ENCODE measurements at regions of chr12 and their contacts with region 1.

Region 1: GRCh38 chr12:4307593-4308333 is 13.2 kb upstream of the TIGAR start:
- DNase-seq: peak; percentile 83
- ATAC-seq: peak; percentile 94
- H3K4me3 ChIP-seq: peak overlapping the region; percentile 50
- H3K27ac ChIP-seq: no peak overlapping the region
- H3K4me1 ChIP-seq: peaks cover 7% of the 10 kb centered on the region
- H3K27me3 ChIP-seq: peaks cover 31% of the 10 kb centered on the region
- CTCF ChIP-seq: peak; percentile 76

Region 2: DNA sequence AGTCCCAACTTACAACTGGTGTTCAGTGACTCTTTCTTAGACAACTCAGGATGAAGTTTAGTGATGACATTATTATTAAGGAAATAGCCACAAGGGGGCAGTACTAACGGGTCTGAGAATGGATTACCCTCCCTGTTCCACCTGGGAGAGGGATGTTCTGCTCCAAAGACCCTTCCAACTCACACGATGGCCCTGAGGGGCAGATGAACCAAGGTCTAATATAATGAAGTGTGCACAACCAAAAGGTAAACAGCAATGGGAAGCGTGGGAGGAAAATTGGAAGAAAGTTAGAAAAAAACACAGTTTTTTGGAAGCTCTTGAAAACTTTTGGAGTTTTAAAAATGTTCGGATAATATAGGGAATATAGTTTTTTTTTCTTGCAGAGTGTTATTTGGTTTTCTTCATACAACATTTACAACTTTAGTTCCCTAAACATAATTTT is 113.8 kb after region 1 on chr12:
- CTCF ChIA-PET with region 1: no interaction called
- POLR2A ChIA-PET with region 1: no interaction called
- intact Hi-C with region 1: loop called (anchors 5 kb)
- DNase-seq: peak; percentile 62
- ATAC-seq: peak; percentile 54
- H3K4me3 ChIP-seq: no peak overlapping the region
- H3K27ac ChIP-seq: no peak overlapping the region
- H3K4me1 ChIP-seq: no peaks in the 10 kb centered on the region
- H3K27me3 ChIP-seq: peaks cover 23% of the 10 kb centered on the region
- CTCF ChIP-seq: peak; percentile 69

Measured in PC-3 (cell line).